Activated CD4-positive, alpha-beta T cell treated with anti-CD3 and anti-CD28 coated beads for 36 hours (primary cell): ENCODE measurements at regions of chr17 and their contacts with region 1.

Region 1: DNA sequence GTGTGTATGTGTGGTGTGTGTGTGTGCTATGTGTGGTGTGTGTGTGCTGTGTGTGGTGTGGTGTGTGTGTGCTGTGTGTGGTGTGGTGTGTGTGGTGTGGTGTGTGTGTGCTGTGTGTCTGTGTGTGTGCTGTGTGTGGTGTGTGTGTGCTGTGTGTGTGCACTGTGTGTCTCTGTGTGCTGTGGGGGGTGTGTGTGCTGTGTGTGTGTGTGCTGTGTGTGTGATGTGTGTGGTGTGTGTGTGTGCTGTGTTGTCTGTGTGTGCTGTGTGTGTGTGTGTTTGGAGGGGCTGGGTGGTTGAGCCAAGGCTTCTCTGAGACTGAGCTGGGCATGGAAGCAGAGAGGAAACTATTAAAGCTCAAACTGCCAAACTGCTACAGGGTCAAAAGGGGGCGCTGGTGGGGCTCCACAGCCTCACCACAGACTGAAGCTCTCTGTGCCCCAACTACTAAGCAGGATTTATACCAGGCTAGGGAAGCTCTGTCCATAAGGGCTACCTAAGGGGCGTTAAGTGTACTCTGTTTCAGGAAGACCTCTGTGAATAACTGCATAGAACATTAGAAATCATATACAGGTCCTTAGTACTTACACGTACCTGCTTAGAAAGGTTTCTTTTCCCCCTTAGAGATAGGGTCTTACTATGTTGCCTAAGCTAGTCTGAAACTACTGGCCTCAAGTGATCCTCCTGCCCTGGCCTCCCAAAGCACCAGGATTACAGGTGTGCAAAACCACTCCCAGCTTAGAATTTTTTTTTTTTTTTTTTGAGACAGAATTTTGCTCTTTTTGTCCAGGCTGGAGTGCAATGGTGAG is 27.8 kb upstream of the GHDC start:
- DNase-seq: peak; percentile 79
- ATAC-seq: peak; percentile 98
- H3K4me3 Mint-ChIP-seq: no peak overlapping the region
- H3K27ac Mint-ChIP-seq: peak overlapping the region; percentile 79
- H3K4me1 Mint-ChIP-seq: peaks cover 6% of the 10 kb centered on the region
- H3K27me3 Mint-ChIP-seq: no peaks in the 10 kb centered on the region

Region 2: GRCh38 chr17:42027961-42028790 is 194.0 kb before region 1 on chr17:
- CTCF ChIA-PET with region 1: no interaction called
- POLR2A ChIA-PET with region 1: no interaction called
- intact Hi-C with region 1: no loop called
- DNase-seq: no peak
- ATAC-seq: no peak
- H3K4me3 Mint-ChIP-seq: no peak overlapping the region
- H3K27ac Mint-ChIP-seq: no peak overlapping the region
- H3K4me1 Mint-ChIP-seq: peaks cover 8% of the 10 kb centered on the region
- H3K27me3 Mint-ChIP-seq: no peaks in the 10 kb centered on the region

Region 3: GRCh38 chr17:42233941-42234340 is 11.8 kb after region 1 on chr17:
- CTCF ChIA-PET with region 1: interaction called, 34 read pairs
- POLR2A ChIA-PET with region 1: no interaction called
- intact Hi-C with region 1: no loop called
- DNase-seq: no peak
- ATAC-seq: no peak
- H3K4me3 Mint-ChIP-seq: no peak overlapping the region
- H3K27ac Mint-ChIP-seq: peak overlapping the region; percentile 21
- H3K4me1 Mint-ChIP-seq: peaks cover 35% of the 10 kb centered on the region
- H3K27me3 Mint-ChIP-seq: no peaks in the 10 kb centered on the region

Region 4: GRCh38 chr17:42266918-42267778 is 45.0 kb after region 1 on chr17:
- CTCF ChIA-PET with region 1: interaction called, 20 read pairs
- POLR2A ChIA-PET with region 1: no interaction called
- intact Hi-C with region 1: no loop called
- DNase-seq: peak; percentile 70
- ATAC-seq: peak; percentile 77
- H3K4me3 Mint-ChIP-seq: peak overlapping the region; percentile 47
- H3K27ac Mint-ChIP-seq: peak overlapping the region; percentile 98
- H3K4me1 Mint-ChIP-seq: peaks cover 61% of the 10 kb centered on the region
- H3K27me3 Mint-ChIP-seq: no peaks in the 10 kb centered on the region

Region 5: GRCh38 chr17:42287926-42288802 is 66.0 kb after region 1 on chr17 and contains the start of gene STAT5A:
- CTCF ChIA-PET with region 1: interaction called, 55 read pairs
- POLR2A ChIA-PET with region 1: interaction called, 6 read pairs
- intact Hi-C with region 1: loop called (anchors 1 to 5 kb)
- DNase-seq: peak; percentile 90
- ATAC-seq: peak; percentile 65
- H3K4me3 Mint-ChIP-seq: peak within 1 kb of the TSS; percentile 81
- H3K27ac Mint-ChIP-seq: peak within 1 kb of the TSS; percentile 96
- H3K4me1 Mint-ChIP-seq: peaks cover 63% of the 10 kb centered on the region
- H3K27me3 Mint-ChIP-seq: no peaks in the 10 kb centered on the region
- total RNA-seq, gene STAT5A: 178 to 203 TPM

Region 6: DNA sequence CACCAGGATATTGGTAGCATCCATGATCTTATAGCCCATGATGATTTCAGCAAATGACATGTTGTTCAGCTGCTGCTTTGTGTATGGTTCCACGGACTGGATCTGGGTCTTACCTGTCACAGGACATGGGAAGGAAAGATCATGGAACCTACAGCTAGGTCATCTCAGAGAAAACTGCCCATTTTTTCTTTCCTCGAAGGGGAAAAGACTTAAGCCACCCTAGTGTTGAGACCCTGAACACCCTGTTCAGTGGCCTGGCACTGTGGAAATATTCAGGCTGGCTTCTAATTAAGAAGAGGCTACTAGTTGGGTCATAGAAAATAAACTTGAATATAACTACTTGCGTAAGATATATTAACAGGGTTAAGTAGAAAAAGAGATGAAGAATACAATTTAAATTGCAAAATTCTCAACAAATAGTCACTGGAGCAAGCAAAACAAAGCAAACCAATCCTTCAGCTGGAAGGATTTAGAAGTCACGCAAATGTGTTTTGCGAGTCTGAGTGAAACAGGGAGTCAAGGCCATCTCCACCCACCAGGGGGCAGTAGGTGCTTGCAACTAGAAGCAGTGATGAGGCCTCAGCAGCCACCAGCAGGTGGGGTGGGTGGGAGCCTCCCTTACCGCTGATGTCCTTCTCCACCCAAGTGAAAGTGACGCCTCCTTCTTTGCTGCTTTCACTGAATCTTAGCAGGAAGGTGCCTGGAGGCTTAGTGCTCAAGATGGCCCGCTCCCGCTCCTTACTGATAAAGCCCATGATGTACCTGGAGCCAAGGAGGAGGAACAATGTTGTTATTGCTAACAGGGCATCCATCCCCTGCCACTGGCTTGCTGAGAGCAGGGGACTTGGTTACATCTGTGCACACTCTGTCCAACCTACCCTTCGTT is 100.5 kb after region 1 on chr17:
- CTCF ChIA-PET with region 1: interaction called, 12 read pairs
- POLR2A ChIA-PET with region 1: no interaction called
- intact Hi-C with region 1: no loop called
- DNase-seq: peak; percentile 97
- ATAC-seq: peak; percentile 87
- H3K4me3 Mint-ChIP-seq: peak overlapping the region; percentile 37
- H3K27ac Mint-ChIP-seq: peak overlapping the region; percentile 56
- H3K4me1 Mint-ChIP-seq: peaks cover 45% of the 10 kb centered on the region
- H3K27me3 Mint-ChIP-seq: no peaks in the 10 kb centered on the region